ENCODE measurements at regions of chr5 and their contacts with region 1.

Region 1: GRCh38 chr5:134411546-134412266 is at the start of gene CDKN2AIPNL:
- DNase-seq: peak; percentile 93
- H3K4me3 Mint-ChIP-seq: peak within 1 kb of the TSS; percentile 96
- H3K27ac Mint-ChIP-seq: peak within 1 kb of the TSS; percentile 91
- H3K4me1 Mint-ChIP-seq: peaks cover 37% of the 10 kb centered on the region
- H3K27me3 Mint-ChIP-seq: no peaks in the 10 kb centered on the region
- CTCF ChIP-seq: peak; percentile 79
- total RNA-seq, gene CDKN2AIPNL: 75.1 and 82.4 TPM in 2 replicates

Region 2: GRCh38 chr5:134370871-134371833 is 40.6 kb before region 1 on chr5 and contains the start of gene UBE2B:
- CTCF ChIA-PET with region 1: interaction called, 12 read pairs
- POLR2A ChIA-PET with region 1: interaction called, 94 read pairs
- intact Hi-C with region 1: loop called (anchors 2 kb)
- DNase-seq: peak; percentile 100
- H3K4me3 Mint-ChIP-seq: peak within 1 kb of the TSS; percentile 99
- H3K27ac Mint-ChIP-seq: peak within 1 kb of the TSS; percentile 99
- H3K4me1 Mint-ChIP-seq: peaks cover 28% of the 10 kb centered on the region
- H3K27me3 Mint-ChIP-seq: no peaks in the 10 kb centered on the region
- CTCF ChIP-seq: no peak
- total RNA-seq, gene UBE2B: 178 and 186 TPM in 2 replicates

Region 3: GRCh38 chr5:134430001-134430569 is 18.4 kb after region 1 on chr5:
- CTCF ChIA-PET with region 1: interaction called, 86 read pairs
- POLR2A ChIA-PET with region 1: interaction called, 91 read pairs
- intact Hi-C with region 1: loop called (anchors 1 kb)
- DNase-seq: no peak
- H3K4me3 Mint-ChIP-seq: no peak overlapping the region
- H3K27ac Mint-ChIP-seq: no peak overlapping the region
- H3K4me1 Mint-ChIP-seq: peaks cover 17% of the 10 kb centered on the region
- H3K27me3 Mint-ChIP-seq: no peaks in the 10 kb centered on the region
- CTCF ChIP-seq: no peak

Region 4: DNA sequence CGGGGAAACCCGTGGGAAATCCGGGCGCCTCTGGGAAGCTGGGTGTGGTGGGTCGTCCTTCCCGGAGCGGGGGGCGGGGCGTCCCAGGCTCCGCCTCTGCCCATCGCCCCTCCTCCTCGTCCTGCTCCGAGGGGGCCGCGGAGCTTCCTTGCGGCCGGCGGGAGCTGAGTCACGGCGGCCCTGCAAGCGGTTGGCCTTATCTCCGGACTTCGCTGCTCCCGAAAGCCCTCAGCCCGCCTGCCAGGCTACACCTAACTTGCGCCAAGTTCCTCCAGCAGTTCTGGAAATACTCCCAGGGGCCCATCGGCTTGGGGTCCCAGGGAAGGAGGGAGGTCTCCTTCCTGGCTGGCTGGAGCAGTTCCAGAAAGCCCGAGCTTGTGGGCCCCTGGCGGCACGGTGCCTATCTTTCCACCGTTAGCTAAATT is 54.1 kb after region 1 on chr5:
- CTCF ChIA-PET with region 1: interaction called, 24 read pairs
- POLR2A ChIA-PET with region 1: interaction called, 84 read pairs
- intact Hi-C with region 1: loop called (anchors 1 kb)
- DNase-seq: peak; percentile 97
- H3K4me3 Mint-ChIP-seq: peak overlapping the region; percentile 72
- H3K27ac Mint-ChIP-seq: peak overlapping the region; percentile 44
- H3K4me1 Mint-ChIP-seq: peaks cover 42% of the 10 kb centered on the region
- H3K27me3 Mint-ChIP-seq: no peaks in the 10 kb centered on the region
- CTCF ChIP-seq: no peak

Region 5: GRCh38 chr5:134511788-134512650 is 100.3 kb after region 1 on chr5:
- CTCF ChIA-PET with region 1: interaction called, 57 read pairs
- POLR2A ChIA-PET with region 1: interaction called, 76 read pairs
- intact Hi-C with region 1: loop called (anchors 1 kb)
- DNase-seq: peak; percentile 95
- H3K4me3 Mint-ChIP-seq: peak overlapping the region; percentile 48
- H3K27ac Mint-ChIP-seq: peak overlapping the region; percentile 82
- H3K4me1 Mint-ChIP-seq: peaks cover 54% of the 10 kb centered on the region
- H3K27me3 Mint-ChIP-seq: no peaks in the 10 kb centered on the region
- CTCF ChIP-seq: peak; percentile 61

Region 6: GRCh38 chr5:134547579-134547978 is 135.9 kb after region 1 on chr5:
- CTCF ChIA-PET with region 1: interaction called, 3 read pairs
- POLR2A ChIA-PET with region 1: interaction called, 14 read pairs
- intact Hi-C with region 1: no loop called
- DNase-seq: peak; percentile 91
- H3K4me3 Mint-ChIP-seq: no peak overlapping the region
- H3K27ac Mint-ChIP-seq: peak overlapping the region; percentile 57
- H3K4me1 Mint-ChIP-seq: peaks cover 19% of the 10 kb centered on the region
- H3K27me3 Mint-ChIP-seq: no peaks in the 10 kb centered on the region
- CTCF ChIP-seq: no peak

Region 7: GRCh38 chr5:134577796-134578363 is 166.2 kb after region 1 on chr5:
- CTCF ChIA-PET with region 1: interaction called, 15 read pairs
- POLR2A ChIA-PET with region 1: interaction called, 3 read pairs
- intact Hi-C with region 1: loop called (anchors 2 kb)
- DNase-seq: peak; percentile 88
- H3K4me3 Mint-ChIP-seq: no peak overlapping the region
- H3K27ac Mint-ChIP-seq: peak overlapping the region; percentile 75
- H3K4me1 Mint-ChIP-seq: peaks cover 24% of the 10 kb centered on the region
- H3K27me3 Mint-ChIP-seq: no peaks in the 10 kb centered on the region
- CTCF ChIP-seq: peak; percentile 96